ENCODE measurements at regions of chr19 and their contacts with region 1.

Region 1: DNA sequence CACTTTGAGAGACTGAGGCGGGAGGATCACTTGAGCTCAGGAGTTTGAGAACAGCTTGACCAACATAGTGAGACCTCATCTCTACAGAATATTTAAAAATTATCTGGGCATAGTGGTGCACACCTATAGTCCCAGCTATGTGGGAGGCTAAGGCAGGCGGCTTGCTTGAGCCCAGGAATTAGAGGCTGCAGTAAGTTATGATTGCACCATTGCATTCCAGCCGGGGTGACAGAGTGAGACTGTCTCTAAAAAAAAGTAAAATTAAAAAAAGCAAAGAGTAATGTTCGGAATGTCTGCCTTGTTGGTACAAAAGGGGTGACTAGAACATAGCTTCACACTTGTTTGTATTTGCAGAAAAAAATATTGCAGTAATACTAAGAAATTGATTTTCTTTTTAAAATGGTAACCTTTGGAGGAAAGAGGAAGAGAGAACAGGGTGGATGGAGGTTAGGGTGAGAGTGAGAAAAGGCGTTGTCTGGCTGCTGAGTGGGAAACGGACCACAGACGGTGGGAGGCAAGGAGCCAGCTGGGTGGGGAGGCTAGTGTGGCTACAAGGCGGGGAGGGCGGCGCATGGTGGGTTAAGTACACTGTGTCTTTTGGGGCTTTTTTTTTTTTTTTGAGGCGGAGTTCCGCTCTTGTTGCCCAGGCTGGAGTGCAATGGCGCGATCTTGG is 10.2 kb downstream of the PPP1R14A start:
- DNase-seq: no peak
- ATAC-seq: no peak
- H3K4me3 Mint-ChIP-seq: no peak overlapping the region
- H3K27ac Mint-ChIP-seq: no peak overlapping the region
- H3K4me1 Mint-ChIP-seq: peaks cover 5% of the 10 kb centered on the region
- H3K27me3 Mint-ChIP-seq: no peaks in the 10 kb centered on the region
- CTCF ChIP-seq: no peak

Region 2: DNA sequence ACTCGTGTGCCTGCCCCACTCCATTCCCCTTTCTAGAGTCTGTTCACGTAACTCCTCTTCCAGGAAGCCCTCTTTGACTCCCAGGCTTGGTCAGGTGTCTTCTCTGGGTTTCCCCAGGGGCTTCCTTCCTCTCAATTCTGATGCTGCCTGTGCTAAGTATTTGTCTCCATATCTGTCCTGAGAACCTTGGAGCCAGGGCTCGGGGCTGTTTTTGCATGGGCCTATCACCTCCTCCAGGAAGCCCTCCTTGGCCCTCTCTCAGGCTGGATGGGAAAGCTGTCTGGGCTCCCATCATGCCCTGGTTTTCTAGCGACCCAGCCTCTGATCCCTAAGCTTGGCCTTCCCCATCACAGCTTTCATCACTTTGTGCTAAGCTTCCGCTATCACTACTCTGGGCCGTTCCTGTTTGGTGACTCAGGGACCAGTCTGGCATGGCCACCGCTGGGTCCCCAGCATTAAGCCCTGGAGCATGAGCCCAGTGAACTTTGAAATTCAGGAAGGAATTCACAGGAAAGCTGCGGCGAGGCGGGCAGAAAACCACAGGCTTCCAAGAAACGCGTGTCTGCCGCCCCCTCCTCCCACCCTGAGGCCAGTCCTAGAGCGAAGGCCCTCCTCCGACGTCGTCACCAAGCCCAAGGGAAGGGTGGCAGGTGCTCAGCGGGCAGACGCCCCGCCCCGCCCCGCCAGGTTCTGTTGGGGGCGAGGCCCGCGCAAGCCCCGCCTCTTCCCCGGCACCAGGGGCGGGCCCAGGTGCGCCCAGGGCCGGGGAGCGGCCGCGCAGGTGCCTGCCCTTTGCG is 17.9 kb after region 1 on chr19:
- CTCF ChIA-PET with region 1: interaction called, 30 read pairs
- POLR2A ChIA-PET with region 1: interaction called, 5 read pairs
- intact Hi-C with region 1: no loop called
- DNase-seq: peak; percentile 89
- ATAC-seq: peak; percentile 89
- H3K4me3 Mint-ChIP-seq: peak overlapping the region; percentile 78
- H3K27ac Mint-ChIP-seq: peak overlapping the region; percentile 97
- H3K4me1 Mint-ChIP-seq: peaks cover 43% of the 10 kb centered on the region
- H3K27me3 Mint-ChIP-seq: peaks cover 2% of the 10 kb centered on the region
- CTCF ChIP-seq: no peak

Region 3: DNA sequence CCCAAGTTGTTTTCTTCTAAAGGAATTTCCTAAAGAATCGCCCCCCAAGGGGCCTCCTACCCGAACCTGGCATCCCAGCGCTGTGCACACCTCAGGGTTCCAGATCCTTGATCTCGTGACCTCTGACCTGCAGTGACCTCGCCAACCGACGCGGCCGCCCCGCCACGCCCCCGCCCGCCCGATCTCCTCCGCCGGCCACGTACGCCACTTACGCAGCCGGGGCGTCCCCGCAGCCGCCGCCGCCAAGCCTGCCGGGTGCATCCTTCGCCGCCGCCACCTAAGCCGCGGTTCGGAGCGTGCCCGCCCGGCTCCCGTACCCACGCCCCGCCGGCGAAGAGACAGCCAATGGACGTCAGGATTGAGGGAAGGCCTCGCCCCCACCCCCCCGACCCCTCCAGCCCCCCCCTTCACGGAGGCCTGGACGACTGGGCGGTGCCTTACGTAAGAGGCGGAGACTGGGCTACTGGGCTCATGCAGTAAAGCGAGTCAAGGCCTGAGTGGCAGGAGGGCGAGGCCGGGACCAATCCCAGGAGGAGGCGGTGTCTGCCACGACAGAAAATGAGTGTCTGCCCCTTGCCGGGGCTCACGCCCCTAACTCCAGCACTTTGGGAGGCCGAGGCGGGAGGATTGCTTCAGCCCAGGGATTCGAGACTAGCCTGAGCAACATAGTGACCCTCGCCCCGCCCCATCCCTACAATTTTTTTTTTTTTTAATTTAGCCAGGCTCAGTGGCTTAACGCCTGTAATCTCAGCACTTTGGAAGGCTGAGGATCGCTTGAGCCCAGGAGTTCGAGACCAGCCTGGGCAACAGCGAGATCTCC is 69.9 kb after region 1 on chr19 and contains the start of gene YIF1B:
- CTCF ChIA-PET with region 1: interaction called, 18 read pairs
- POLR2A ChIA-PET with region 1: no interaction called
- intact Hi-C with region 1: no loop called
- DNase-seq: peak; percentile 97
- ATAC-seq: peak; percentile 96
- H3K4me3 Mint-ChIP-seq: peak within 1 kb of the TSS; percentile 95
- H3K27ac Mint-ChIP-seq: peak within 1 kb of the TSS; percentile 95
- H3K4me1 Mint-ChIP-seq: peaks cover 42% of the 10 kb centered on the region
- H3K27me3 Mint-ChIP-seq: no peaks in the 10 kb centered on the region
- CTCF ChIP-seq: no peak
- total RNA-seq, gene YIF1B: 75.6 to 79.0 TPM

Region 4: DNA sequence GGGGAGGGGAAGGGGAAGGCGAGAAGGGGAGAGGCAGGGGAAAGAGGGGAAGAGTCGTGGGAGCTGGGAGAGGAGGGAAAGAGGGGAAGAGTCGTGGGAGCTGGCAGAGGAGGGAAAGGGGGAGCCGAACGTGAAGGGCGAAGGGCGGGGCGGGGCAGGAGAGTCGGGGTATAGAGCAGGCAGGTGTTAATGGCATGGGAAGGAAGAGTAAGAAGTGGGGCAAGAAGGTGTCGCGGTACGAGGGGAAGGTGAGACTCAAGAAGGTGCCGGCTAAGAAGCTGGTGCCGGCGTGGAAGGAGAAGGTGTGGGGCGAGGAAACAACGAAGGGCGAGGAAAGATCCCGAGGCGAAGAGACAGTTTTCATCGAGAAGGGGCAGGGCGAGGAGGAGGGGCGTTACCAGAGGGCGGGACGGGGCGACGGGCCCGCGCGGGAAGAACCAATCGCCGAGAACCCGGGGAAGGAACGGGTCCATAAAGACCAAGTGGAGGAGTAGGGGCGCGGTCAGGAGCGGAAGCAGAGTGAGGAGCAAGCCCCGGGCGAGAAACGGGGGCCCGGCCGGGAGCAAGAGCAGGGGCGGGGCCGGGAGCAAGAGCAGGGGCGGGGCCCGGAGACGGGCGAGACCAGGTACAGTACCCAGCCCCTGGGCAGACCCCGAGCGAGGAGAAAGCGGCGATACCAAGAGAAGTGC is 90.1 kb after region 1 on chr19:
- CTCF ChIA-PET with region 1: interaction called, 33 read pairs
- POLR2A ChIA-PET with region 1: interaction called, 3 read pairs
- intact Hi-C with region 1: loop called (anchors 1 kb)
- DNase-seq: peak; percentile 97
- ATAC-seq: peak; percentile 71
- H3K4me3 Mint-ChIP-seq: peak overlapping the region; percentile 87
- H3K27ac Mint-ChIP-seq: peak overlapping the region; percentile 97
- H3K4me1 Mint-ChIP-seq: peaks cover 12% of the 10 kb centered on the region
- H3K27me3 Mint-ChIP-seq: no peaks in the 10 kb centered on the region
- CTCF ChIP-seq: no peak

Measured in activated CD8-positive, alpha-beta T cell treated with anti-CD3 and anti-CD28 coated beads for 36 hours (primary cell).